GM18951 (cell line): ENCODE measurements at regions of chr2 and their contacts with region 1.

Region 1: GRCh38 chr2:129984426-129984825 is 5.0 kb downstream of the RAB6C start:
- POLR2A ChIP-seq: no peak

Region 2: DNA sequence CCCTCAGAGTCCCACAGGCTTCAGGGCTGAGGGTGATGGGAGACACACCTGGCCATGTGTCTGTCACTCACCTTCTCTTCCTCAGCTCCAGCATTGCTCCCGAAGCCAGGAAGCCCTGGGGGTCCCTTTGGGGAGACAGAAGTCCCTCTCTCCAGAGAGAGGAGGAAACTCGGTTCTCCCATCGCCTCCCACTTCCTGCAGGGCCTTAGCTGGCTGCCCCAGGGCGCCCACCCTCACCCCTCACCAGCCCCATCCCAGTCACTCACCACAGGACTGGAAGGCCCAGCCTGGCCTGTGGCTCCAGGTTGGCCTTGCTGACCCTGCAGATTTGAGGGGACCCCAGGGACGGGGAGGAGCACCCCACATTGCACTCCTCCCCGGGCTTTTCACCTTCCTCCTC is 1382.2 kb after region 1 on chr2:
- in situ Hi-C with region 1: loop called (anchors 10 kb)
- POLR2A ChIP-seq: no peak